ENCODE measurements at regions of chr16 and their contacts with region 1.

Region 1: GRCh38 chr16:47311738-47312505 is 148.9 kb downstream of the ITFG1 start:
- DNase-seq: no peak
- ATAC-seq: peak in 3 of 4 donors; percentile 52 to 74 (median 66)
- H3K4me3 ChIP-seq: no peak overlapping the region
- H3K27ac ChIP-seq: peak overlapping the region; percentile 61
- H3K4me1 ChIP-seq: peaks cover 46% of the 10 kb centered on the region
- H3K27me3 ChIP-seq: no peaks in the 10 kb centered on the region
- CTCF ChIP-seq: no peak

Region 2: DNA sequence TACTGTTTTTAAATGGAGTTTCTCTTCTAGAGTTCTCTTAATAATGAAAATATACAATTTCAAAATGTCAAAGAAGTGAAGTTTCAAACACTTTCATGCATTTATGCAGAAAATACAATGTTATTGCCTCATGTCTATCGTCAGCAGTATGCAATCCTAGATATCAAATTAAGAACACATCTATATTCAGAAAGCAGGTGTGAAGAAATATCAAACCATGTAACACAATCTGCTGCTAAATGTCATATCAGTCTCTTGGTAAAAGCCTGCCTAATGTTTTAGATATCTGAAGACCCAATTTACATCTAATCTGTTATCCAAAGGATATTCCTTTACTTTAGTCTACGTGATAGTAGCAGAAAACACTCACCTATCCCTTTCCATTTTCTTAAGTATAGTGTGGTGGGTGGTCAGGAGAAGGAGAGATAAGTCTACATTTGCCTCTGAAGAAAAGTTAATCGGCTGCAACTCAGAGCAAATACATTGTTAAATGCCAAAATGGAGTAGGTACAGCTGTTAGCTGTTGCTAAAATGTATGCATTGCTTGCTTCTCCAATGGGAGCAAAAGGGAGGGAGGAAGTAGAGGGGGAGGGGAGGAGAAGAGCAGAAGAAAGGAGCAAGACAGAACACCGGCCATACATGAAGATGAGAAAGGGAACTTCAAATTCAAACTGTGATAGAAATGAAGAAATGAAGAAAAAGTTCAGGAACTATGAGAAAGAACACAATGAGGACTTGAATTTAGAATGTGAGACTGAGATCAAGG is 84.0 kb after region 1 on chr16:
- intact Hi-C with region 1: loop called in 1 of 2 experiments (anchors 5 kb)
- DNase-seq: no peak
- ATAC-seq: peak; percentile 77 to 93 (median 84)
- H3K4me3 ChIP-seq: peak overlapping the region; percentile 59
- H3K27ac ChIP-seq: peak overlapping the region; percentile 74
- H3K4me1 ChIP-seq: peaks cover 25% of the 10 kb centered on the region
- H3K27me3 ChIP-seq: no peaks in the 10 kb centered on the region
- CTCF ChIP-seq: no peak

Region 3: DNA sequence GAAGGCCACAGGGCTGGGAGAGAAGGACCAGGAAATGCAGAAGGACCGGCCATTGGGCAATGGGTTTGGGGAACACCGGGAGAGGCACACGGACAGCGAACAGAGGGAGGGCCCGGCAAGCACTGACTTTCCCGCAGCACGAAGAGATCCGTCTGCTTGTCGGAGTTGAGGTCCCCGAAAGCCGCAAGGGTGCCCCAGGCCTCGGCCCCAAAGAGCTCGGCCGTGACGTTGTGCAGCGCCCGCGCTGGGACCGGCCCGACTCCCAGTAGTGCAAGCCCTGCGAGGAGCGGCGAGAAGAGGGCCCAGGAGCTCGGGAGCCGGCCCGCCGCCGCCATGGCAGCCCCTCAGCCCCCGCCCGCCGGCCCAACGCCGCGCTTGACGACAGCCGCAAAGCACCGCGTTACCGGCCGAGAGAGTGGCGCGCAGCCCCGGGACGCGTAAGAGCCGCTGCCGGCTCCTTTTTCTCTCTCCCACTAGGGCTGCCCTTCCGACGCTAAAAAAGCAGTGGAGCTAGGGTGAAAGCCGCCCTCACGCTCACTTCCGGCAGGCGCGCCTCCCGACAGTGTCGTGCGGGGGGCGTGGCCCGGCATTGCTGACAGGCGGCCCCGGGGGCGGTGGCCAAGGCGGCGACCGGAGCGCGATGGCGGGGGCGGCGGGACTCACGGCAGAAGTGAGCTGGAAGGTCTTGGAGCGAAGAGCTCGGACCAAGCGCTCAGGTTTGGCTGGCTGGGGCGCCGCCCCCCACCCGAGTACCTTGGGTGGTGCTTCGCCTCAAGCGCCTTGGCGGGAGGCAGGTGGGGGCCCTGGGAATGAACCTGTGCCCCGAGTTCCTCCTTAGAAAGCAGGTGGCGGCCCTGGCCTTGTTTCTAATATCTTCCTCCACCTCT is 149.0 kb after region 1 on chr16 and contains the starts of genes ITFG1 and PHKB:
- intact Hi-C with region 1: loop called in 1 of 2 experiments (anchors 10 kb)
- DNase-seq: peak; percentile 96
- ATAC-seq: peak; percentile 94 to 97 (median 96)
- H3K4me3 ChIP-seq: peak within 1 kb of the TSS; percentile 88
- H3K27ac ChIP-seq: peak within 1 kb of the TSS; percentile 95
- H3K4me1 ChIP-seq: peaks cover 55% of the 10 kb centered on the region
- H3K27me3 ChIP-seq: no peaks in the 10 kb centered on the region
- CTCF ChIP-seq: no peak
- total RNA-seq, gene ITFG1: 20.7 to 30.3 (median 23.6) TPM
- total RNA-seq, gene PHKB: 59.7 to 87.7 (median 73.5) TPM

Measured in psoas muscle (tissue), 8 donors.